GM10248 (cell line): ENCODE measurements at regions of chr5 and their contacts with region 1.

Region 1: DNA sequence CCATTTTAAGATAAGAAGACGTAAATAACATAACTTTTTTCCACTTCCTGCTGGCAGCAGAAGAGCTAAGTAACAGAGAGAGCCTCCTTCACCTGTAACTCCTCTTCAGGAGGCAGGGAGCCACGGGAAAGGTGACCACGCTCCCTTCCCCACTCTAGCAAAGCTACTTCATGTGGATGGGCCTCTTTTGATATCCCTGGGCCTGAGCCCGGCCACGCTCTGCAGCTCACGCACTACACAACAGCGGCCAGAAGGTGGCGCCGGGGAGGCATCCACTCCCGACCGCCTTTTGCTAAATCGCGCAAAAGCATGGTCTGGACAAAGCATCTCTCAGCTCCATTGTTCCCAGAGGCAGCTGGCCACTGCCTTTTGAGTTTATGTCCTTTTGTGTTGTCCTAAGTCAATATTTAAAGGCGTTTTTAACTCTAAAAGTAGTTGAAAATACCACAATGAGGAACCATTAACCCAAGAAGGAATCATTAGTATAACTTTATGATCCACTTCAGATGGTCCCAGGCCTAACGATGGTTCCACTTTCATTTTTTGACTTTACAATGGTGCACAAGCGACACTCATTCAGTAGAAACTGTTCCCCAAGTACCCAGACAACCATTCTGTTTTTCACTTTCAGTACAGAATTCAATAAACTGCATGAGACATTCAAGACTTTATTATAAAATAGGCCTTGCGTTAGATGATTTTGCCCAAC is 23.6 kb downstream of the CMBL start:
- DNase-seq: peak; percentile 85
- CTCF ChIP-seq: peak; percentile 92

Region 2: GRCh38 chr5:10249948-10250803 is 33.9 kb before region 1 on chr5 and contains the start of gene CCT5:
- CTCF ChIA-PET with region 1: interaction called, 14 read pairs
- POLR2A ChIA-PET with region 1: interaction called, 3 read pairs
- DNase-seq: peak; percentile 95
- CTCF ChIP-seq: no peak

Region 3: GRCh38 chr5:10295619-10296326 is 11.7 kb after region 1 on chr5:
- CTCF ChIA-PET with region 1: interaction called, 18 read pairs
- POLR2A ChIA-PET with region 1: no interaction called
- DNase-seq: no peak
- CTCF ChIP-seq: no peak

Region 4: GRCh38 chr5:10358999-10359398 is 74.9 kb after region 1 on chr5:
- CTCF ChIA-PET with region 1: interaction called, 16 read pairs
- POLR2A ChIA-PET with region 1: no interaction called
- DNase-seq: no peak
- CTCF ChIP-seq: no peak

Region 5: DNA sequence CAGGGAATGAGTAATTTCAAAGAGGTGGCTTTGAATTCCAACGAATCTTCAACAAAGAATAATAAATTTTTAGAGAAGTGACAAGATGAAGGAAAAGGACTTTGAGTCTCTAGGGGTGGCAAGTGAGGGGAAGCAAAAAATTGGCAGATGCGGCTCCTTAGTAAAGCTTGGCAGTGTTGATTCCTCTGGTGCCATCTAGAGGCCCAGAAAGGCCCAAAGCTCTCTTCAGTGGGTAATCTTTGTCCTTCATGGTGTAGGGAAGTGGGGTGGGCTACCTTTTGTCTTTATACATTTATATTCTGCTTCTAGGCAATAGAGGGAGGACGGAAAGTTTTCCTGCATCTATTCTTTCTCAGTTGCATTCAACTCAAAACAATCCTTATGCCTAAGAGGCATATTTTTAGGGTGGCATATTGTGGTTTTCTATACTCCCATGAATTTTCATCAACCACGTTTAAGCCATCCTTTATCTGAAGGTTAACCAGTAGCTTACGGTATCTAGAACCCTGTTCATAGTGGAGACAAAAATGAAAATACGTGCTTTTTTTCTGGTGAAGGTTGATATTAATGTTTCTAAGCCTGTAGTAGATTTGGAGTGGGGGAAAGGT is 140.1 kb after region 1 on chr5:
- CTCF ChIA-PET with region 1: interaction called, 13 read pairs
- POLR2A ChIA-PET with region 1: no interaction called
- DNase-seq: no peak
- CTCF ChIP-seq: peak; percentile 17

Region 6: GRCh38 chr5:10538789-10539686 is 255.0 kb after region 1 on chr5:
- CTCF ChIA-PET with region 1: no interaction called
- POLR2A ChIA-PET with region 1: no interaction called
- DNase-seq: no peak
- CTCF ChIP-seq: no peak